Stomach (tissue), 19 donors: ENCODE measurements at regions of chr15 and their contacts with region 1.

Region 1: GRCh38 chr15:82177291-82178010 is 85.1 kb downstream of the EFL1 start:
- DNase-seq: peak in 1 of 2 donors; percentile 12
- H3K4me3 ChIP-seq: no peak overlapping the region
- H3K27ac ChIP-seq: no peak overlapping the region
- H3K4me1 ChIP-seq: peaks cover 0 to 8% (median 3%) of the 10 kb centered on the region in 4 donors
- H3K27me3 ChIP-seq: no peaks in the 10 kb centered on the region
- CTCF ChIP-seq: no peak
- EP300 ChIP-seq: no peak
- POLR2A ChIP-seq: no peak

Region 2: GRCh38 chr15:81901319-81901718 is 276.1 kb before region 1 on chr15:
- intact Hi-C with region 1: no loop called
- DNase-seq: no peak
- H3K4me3 ChIP-seq: no peak overlapping the region
- H3K27ac ChIP-seq: no peak overlapping the region
- H3K4me1 ChIP-seq: no peaks in the 10 kb centered on the region
- H3K27me3 ChIP-seq: no peaks in the 10 kb centered on the region
- CTCF ChIP-seq: no peak
- EP300 ChIP-seq: no peak
- POLR2A ChIP-seq: no peak

Region 3: GRCh38 chr15:82122746-82123400 is 54.6 kb before region 1 on chr15:
- intact Hi-C with region 1: loop called (anchors 10 kb)
- DNase-seq: peak; percentile 25 to 59
- H3K4me3 ChIP-seq: no peak overlapping the region
- H3K27ac ChIP-seq: no peak overlapping the region
- H3K4me1 ChIP-seq: peaks cover 0 to 14% (median 0%) of the 10 kb centered on the region in 4 donors
- H3K27me3 ChIP-seq: no peaks in the 10 kb centered on the region
- CTCF ChIP-seq: no peak
- EP300 ChIP-seq: no peak
- POLR2A ChIP-seq: no peak